ENCODE measurements at regions of chr1 and their contacts with region 1.

Region 1: GRCh38 chr1:162297208-162297607 is 79.4 kb downstream of the SPATA46 start:
- DNase-seq: no peak
- H3K4me3 ChIP-seq: no peak overlapping the region
- CTCF ChIP-seq: no peak
- POLR2A ChIP-seq: no peak

Region 2: GRCh38 chr1:162319493-162320175 is 22.4 kb after region 1 on chr1:
- intact Hi-C with region 1: loop called (anchors 1 kb)
- DNase-seq: no peak
- H3K4me3 ChIP-seq: no peak overlapping the region
- CTCF ChIP-seq: no peak
- POLR2A ChIP-seq: no peak

Measured in lower leg skin (tissue), 4 donors.